Activated naive CD4-positive, alpha-beta T cell treated with anti-CD3 and anti-CD28 coated beads for 36 hours (primary cell): ENCODE measurements at regions of chr17 and their contacts with region 1.

Region 1: DNA sequence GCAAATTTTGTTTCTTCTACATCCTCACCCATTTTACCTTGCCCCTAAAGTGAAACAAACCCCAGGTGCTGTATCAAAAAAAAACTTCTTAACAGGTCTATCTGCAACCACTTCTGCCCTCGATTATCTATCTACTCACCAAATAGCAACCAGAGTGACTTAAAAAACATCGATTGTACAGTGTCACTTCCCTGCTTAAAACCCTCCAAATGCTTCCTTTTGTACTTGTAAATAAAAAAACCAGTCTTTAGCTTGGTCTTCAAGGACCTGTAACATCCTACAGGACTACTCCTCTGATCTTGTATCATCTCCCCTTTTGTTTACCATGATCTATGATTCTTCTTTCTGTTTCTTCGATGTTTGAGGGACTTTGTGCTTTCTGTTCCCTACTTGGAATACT is 82.7 kb upstream of the CORO6 start:
- DNase-seq: no peak
- H3K4me3 Mint-ChIP-seq: peak overlapping the region; percentile 55
- H3K27ac Mint-ChIP-seq: peak overlapping the region; percentile 96
- H3K4me1 Mint-ChIP-seq: peaks cover 46% of the 10 kb centered on the region
- H3K27me3 Mint-ChIP-seq: no peaks in the 10 kb centered on the region

Region 2: DNA sequence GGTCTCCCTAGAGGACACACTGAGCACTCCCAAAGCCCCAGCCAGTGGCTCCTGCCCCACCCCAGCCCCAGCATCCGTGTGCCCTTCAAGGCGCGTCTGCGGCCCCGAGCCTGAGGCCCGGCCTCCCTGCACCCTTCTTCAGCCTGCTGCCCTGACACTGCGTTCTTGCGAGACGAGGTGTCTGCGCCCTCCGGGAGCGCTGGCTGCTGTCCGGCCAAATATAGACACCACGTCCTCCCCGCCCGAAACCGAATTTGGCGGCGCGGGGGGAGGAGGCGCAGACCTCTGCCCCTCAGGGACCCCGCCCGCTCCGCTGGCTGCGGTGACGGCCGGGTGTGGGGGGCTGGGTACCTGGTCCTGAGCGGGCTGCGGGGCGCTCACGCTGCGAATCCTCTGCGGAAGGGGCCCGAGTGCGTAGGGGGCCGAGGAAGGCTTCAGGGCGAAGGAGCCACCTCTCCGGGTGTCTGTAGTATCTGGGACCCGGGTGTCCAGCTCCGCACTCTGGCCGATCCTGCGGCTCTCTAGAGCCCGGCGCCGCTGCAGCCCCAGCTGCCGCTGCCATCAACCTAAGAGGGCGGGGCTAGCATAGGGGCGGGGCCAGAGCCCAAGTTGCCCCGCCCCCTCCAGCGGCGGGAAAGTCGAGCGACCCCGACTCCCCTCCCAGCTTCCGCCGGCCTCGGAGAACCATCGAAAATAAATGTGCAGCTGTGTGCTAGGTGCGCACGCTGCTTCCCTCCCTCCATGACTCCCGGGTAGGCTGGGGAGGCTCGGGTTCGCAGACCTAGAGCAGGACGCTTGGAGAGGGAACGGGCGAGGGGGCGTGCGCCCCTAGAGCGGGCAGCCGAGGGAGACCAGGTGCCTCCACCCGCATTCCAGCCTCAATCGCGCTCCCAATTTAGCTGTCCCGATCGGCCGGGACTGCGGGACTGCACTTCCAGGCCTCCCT is 82.8 kb before region 1 on chr17 and contains the start of gene CORO6:
- CTCF ChIA-PET with region 1: interaction called, 14 read pairs
- intact Hi-C with region 1: loop called (anchors 1 kb)
- DNase-seq: peak; percentile 75
- H3K4me3 Mint-ChIP-seq: peak within 1 kb of the TSS; percentile 79
- H3K27ac Mint-ChIP-seq: peak within 1 kb of the TSS; percentile 96
- H3K4me1 Mint-ChIP-seq: peaks cover 57% of the 10 kb centered on the region
- H3K27me3 Mint-ChIP-seq: no peaks in the 10 kb centered on the region
- total RNA-seq, gene CORO6: 24.8 to 27.3 TPM

Region 3: GRCh38 chr17:29687596-29687995 is 17.8 kb before region 1 on chr17:
- CTCF ChIA-PET with region 1: interaction called, 15 read pairs
- intact Hi-C with region 1: loop called (anchors 1 kb)
- DNase-seq: no peak
- H3K4me3 Mint-ChIP-seq: no peak overlapping the region
- H3K27ac Mint-ChIP-seq: no peak overlapping the region
- H3K4me1 Mint-ChIP-seq: peaks cover 34% of the 10 kb centered on the region
- H3K27me3 Mint-ChIP-seq: no peaks in the 10 kb centered on the region

Region 4: GRCh38 chr17:29722411-29723198 is 17.2 kb after region 1 on chr17:
- CTCF ChIA-PET with region 1: interaction called, 4 read pairs
- intact Hi-C with region 1: loop called (anchors 1 kb)
- DNase-seq: peak; percentile 58
- H3K4me3 Mint-ChIP-seq: peak overlapping the region; percentile 55
- H3K27ac Mint-ChIP-seq: peak overlapping the region; percentile 80
- H3K4me1 Mint-ChIP-seq: peaks cover 83% of the 10 kb centered on the region
- H3K27me3 Mint-ChIP-seq: no peaks in the 10 kb centered on the region